Activated CD4-positive, alpha-beta memory T cell treated with anti-CD3 and anti-CD28 coated beads for 36 hours (primary cell): ENCODE measurements at regions of chr4 and their contacts with region 1.

Region 1: GRCh38 chr4:98828801-98829200 is 100.1 kb downstream of the EIF4E start:
- DNase-seq: peak; percentile 42
- H3K4me3 Mint-ChIP-seq: no peak overlapping the region
- H3K27ac Mint-ChIP-seq: no peak overlapping the region
- H3K4me1 Mint-ChIP-seq: peaks cover 5% of the 10 kb centered on the region
- H3K27me3 Mint-ChIP-seq: no peaks in the 10 kb centered on the region

Region 2: DNA sequence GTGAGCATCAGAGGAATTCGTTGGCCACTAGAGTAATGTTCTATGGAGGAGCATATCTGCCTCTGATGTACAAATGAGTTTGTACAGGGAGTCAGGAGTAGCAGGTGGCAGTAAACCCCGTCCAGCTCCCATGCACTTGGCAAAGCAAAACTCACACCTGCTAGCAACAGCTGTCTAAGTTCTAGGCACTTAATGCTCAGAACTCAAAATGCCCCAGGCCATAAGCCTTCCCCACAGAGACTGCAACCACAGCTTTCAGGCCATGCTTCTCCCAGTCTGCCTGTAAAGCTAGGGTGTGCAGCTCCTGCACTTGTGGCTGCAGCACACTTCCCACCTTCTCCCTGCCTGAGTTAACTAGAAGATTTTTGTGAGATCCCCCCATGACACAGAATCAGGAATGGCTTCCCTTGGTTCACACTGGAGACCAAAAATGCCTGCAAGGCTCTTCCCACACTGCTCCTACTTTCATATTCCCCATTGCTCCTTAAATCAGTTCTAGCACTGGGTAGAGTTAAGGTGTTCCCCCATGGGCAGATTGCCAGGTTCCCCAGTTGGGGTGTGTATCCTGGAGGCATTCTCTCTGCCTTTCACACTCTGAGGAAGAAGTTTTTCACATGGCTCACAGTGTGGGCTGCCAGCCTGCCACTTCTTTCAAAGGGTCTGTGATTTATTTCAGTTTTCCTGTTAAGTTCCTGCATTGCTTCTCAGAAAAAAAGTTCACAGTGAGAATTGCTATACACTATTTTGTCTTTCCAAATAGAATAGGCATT is 875.4 kb before region 1 on chr4:
- CTCF ChIA-PET with region 1: no interaction called
- POLR2A ChIA-PET with region 1: no interaction called
- intact Hi-C with region 1: no loop called
- DNase-seq: no peak
- H3K4me3 Mint-ChIP-seq: no peak overlapping the region
- H3K27ac Mint-ChIP-seq: no peak overlapping the region
- H3K4me1 Mint-ChIP-seq: no peaks in the 10 kb centered on the region
- H3K27me3 Mint-ChIP-seq: no peaks in the 10 kb centered on the region

Region 3: DNA sequence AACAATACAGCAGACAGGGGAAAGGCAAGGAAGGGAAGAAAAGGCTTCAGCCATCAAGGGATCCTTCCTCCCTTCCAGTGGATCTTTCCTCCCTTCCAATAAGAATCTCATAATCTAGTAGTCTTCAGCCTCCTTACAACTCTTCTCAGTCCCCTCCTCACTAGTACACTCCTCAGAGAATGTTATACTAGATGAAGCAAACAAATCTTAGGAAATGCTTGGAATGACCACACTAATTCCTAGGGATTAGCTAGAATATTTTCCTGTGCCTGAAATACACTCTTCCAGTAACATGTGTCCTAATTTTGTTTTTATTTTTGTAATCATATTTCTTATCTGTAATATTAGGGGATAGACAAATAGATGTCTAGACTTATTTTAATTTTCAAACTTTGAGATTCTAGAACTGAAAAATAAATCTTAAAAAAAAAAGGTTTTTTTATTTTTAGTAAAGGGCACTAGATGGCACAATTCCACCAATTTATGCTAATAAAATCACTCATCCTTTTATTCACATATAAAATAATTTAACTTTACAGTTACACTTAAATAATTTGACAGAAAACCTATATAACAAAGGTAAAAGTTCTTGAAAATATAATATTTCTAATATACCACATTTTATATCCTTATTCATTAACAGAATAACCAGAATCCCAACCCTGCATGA is 678.6 kb before region 1 on chr4:
- CTCF ChIA-PET with region 1: no interaction called
- POLR2A ChIA-PET with region 1: no interaction called
- intact Hi-C with region 1: loop called (anchors 2 kb)
- DNase-seq: no peak
- H3K4me3 Mint-ChIP-seq: no peak overlapping the region
- H3K27ac Mint-ChIP-seq: no peak overlapping the region
- H3K4me1 Mint-ChIP-seq: peaks cover 5% of the 10 kb centered on the region
- H3K27me3 Mint-ChIP-seq: no peaks in the 10 kb centered on the region

Region 4: DNA sequence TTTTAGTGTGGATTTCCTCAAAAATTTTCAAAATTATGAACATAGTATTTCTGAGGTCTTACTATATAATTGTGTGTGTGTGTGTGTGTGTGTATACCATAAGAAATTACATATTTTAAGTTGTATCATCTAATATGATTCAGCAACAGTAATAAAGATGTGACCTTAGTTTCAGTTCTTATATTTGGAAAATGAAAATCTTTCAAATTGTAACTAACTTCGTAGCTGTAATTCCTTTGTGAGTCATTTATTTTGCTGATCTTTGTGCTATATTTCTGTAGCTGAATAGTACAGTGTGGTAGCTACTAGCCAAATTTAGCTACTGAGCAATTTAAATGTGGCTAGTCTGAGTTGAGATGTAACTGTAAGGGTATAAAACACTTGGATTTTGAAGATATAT is 451.2 kb before region 1 on chr4:
- CTCF ChIA-PET with region 1: no interaction called
- POLR2A ChIA-PET with region 1: no interaction called
- intact Hi-C with region 1: no loop called
- DNase-seq: no peak
- H3K4me3 Mint-ChIP-seq: no peak overlapping the region
- H3K27ac Mint-ChIP-seq: no peak overlapping the region
- H3K4me1 Mint-ChIP-seq: peaks cover 14% of the 10 kb centered on the region
- H3K27me3 Mint-ChIP-seq: no peaks in the 10 kb centered on the region

Region 5: DNA sequence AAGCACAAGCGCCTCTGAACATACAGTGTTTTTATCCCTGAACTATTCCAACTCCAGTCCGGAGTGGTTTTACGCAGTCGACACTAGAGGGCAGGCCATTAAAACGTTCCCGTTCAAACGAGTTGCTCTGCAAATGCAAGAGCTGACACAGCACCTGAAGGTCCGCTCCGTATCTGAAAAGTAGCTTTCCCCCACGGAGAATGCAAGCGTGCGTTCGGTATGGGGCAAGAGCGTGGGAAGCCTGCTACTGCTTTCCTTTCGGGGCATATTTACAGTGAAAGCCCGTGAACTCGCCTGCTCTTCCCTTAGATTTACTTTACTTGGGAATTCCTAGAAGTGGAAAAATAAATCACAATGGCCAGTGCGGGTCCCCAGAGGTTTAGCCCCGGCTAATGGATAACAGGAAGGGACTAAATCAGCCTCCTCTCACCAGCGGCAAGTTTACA is 361.2 kb before region 1 on chr4:
- CTCF ChIA-PET with region 1: interaction called, 5 read pairs
- POLR2A ChIA-PET with region 1: no interaction called
- intact Hi-C with region 1: loop called (anchors 2 kb)
- DNase-seq: peak; percentile 82
- H3K4me3 Mint-ChIP-seq: peak overlapping the region; percentile 67
- H3K27ac Mint-ChIP-seq: no peak overlapping the region
- H3K4me1 Mint-ChIP-seq: peaks cover 27% of the 10 kb centered on the region
- H3K27me3 Mint-ChIP-seq: no peaks in the 10 kb centered on the region

Region 6: GRCh38 chr4:98745366-98745765 is 83.4 kb before region 1 on chr4:
- CTCF ChIA-PET with region 1: no interaction called
- POLR2A ChIA-PET with region 1: no interaction called
- intact Hi-C with region 1: no loop called
- DNase-seq: peak; percentile 18
- H3K4me3 Mint-ChIP-seq: no peak overlapping the region
- H3K27ac Mint-ChIP-seq: no peak overlapping the region
- H3K4me1 Mint-ChIP-seq: no peaks in the 10 kb centered on the region
- H3K27me3 Mint-ChIP-seq: no peaks in the 10 kb centered on the region

Region 7: GRCh38 chr4:98838977-98839618 is 10.3 kb after region 1 on chr4:
- CTCF ChIA-PET with region 1: no interaction called
- POLR2A ChIA-PET with region 1: no interaction called
- intact Hi-C with region 1: no loop called
- DNase-seq: no peak
- H3K4me3 Mint-ChIP-seq: no peak overlapping the region
- H3K27ac Mint-ChIP-seq: no peak overlapping the region
- H3K4me1 Mint-ChIP-seq: no peaks in the 10 kb centered on the region
- H3K27me3 Mint-ChIP-seq: no peaks in the 10 kb centered on the region